CD4-positive, alpha-beta memory T cell (primary cell): ENCODE measurements at regions of chr11 and their contacts with region 1.

Region 1: GRCh38 chr11:18706330-18707243 is 8.0 kb downstream of the TMEM86A start:
- DNase-seq: peak; percentile 50 to 77 (median 61)
- H3K4me3 ChIP-seq: peak overlapping the region; percentile 53 to 60
- H3K4me3 Mint-ChIP-seq: peak overlapping the region; percentile 91 to 97 (median 95)
- H3K27ac ChIP-seq: peak overlapping the region; percentile 52
- H3K27ac Mint-ChIP-seq: peak overlapping the region; percentile 78 to 98 (median 96)
- H3K4me1 ChIP-seq: peaks cover 13% of the 10 kb centered on the region
- H3K4me1 Mint-ChIP-seq: peaks cover 13 to 30% (median 21%) of the 10 kb centered on the region in 4 donors
- H3K27me3 ChIP-seq: no peaks in the 10 kb centered on the region
- H3K27me3 Mint-ChIP-seq: no peaks in the 10 kb centered on the region

Region 2: DNA sequence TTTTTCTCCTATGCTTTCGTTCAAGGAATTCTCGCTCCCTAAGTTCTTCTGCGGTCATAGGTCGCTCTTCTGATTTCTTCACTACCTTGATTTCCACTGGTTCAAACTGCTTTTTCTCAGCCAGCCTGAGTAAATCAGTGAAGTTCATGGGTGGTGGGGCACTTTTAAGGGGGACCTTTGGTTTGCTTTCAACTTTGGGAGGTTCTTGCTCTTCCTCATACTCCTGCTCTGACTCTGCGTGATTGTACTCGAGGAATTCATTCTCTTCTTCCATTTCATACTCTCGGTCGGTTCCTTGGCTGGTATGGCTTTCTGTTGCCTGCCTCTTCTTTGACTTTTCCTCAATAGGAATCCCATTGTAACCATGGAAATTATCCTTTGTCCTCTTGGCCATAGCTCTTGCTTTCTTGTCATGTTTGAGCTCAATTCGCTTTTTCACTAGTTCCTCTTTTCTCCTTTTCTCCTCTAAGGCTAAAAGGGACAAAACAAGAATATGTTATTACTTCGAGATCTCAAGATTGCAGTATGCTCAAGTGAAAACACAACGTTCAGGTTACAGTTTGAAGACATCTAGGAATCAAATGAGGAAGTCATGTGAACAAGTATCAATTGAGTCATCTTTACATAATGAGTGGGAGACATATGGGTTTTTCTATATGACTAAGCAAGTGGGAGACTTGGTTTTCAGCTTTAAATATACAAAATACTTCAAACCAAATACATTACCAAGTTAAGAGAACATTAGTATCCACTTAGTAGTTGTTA is 90.8 kb before region 1 on chr11:
- CTCF ChIA-PET with region 1: interaction called, 3 read pairs
- POLR2A ChIA-PET with region 1: interaction called, 7 read pairs
- intact Hi-C with region 1: loop called (anchors 2 kb)
- DNase-seq: no peak
- H3K4me3 ChIP-seq: no peak overlapping the region
- H3K4me3 Mint-ChIP-seq: peak overlapping the region in 5 of 8 donors; percentile 1 to 43 (median 15)
- H3K27ac ChIP-seq: no peak overlapping the region
- H3K27ac Mint-ChIP-seq: peak overlapping the region in 4 of 7 donors; percentile 63 to 90 (median 70)
- H3K4me1 ChIP-seq: peaks cover 48% of the 10 kb centered on the region
- H3K4me1 Mint-ChIP-seq: peaks cover 31 to 61% (median 42%) of the 10 kb centered on the region in 4 donors
- H3K27me3 ChIP-seq: no peaks in the 10 kb centered on the region
- H3K27me3 Mint-ChIP-seq: no peaks in the 10 kb centered on the region

Region 3: GRCh38 chr11:18669220-18669598 is 37.4 kb before region 1 on chr11:
- CTCF ChIA-PET with region 1: interaction called, 10 read pairs
- POLR2A ChIA-PET with region 1: interaction called, 6 read pairs
- intact Hi-C with region 1: no loop called
- DNase-seq: peak in 2 of 5 donors; percentile 13 to 63
- H3K4me3 ChIP-seq: no peak overlapping the region
- H3K4me3 Mint-ChIP-seq: peak overlapping the region in 7 of 8 donors; percentile 20 to 69 (median 63)
- H3K27ac ChIP-seq: no peak overlapping the region
- H3K27ac Mint-ChIP-seq: peak overlapping the region; percentile 3 to 91 (median 70)
- H3K4me1 ChIP-seq: peaks cover 47% of the 10 kb centered on the region
- H3K4me1 Mint-ChIP-seq: peaks cover 27 to 76% (median 52%) of the 10 kb centered on the region in 4 donors
- H3K27me3 ChIP-seq: no peaks in the 10 kb centered on the region
- H3K27me3 Mint-ChIP-seq: no peaks in the 10 kb centered on the region

Region 4: DNA sequence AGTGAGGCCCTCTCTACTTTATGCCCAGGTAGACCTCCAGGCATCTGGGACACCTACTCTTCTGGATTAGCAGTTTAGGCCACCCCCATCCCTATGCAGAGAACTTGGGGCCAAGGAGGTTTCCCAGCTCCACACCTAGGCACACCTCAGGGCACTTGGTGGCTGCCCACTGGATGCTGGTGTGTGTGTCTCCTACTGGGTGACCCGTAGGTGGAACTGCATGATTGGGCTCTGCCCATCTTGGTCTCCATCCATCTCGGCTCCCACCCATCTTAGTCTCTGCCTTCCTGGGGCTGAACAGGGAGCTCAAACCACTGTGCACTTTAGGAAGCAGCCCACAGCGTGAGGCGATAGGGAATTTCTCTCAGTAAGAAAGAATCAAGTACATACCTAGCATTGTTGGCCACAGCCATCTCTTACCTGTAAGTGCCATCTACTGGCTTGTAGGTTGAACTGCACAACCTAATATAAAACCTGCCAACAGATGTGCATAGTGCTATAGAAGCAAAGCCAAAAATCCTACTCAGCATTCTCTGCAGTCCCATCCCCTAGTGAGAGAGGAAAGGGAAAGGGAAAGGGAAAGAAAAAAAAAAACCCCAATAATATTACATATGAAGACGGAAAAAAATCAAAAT is 146.6 kb after region 1 on chr11:
- CTCF ChIA-PET with region 1: no interaction called
- POLR2A ChIA-PET with region 1: no interaction called
- intact Hi-C with region 1: no loop called
- DNase-seq: peak in 1 of 5 donors; percentile 1
- H3K4me3 ChIP-seq: no peak overlapping the region
- H3K4me3 Mint-ChIP-seq: no peak overlapping the region
- H3K27ac ChIP-seq: no peak overlapping the region
- H3K27ac Mint-ChIP-seq: no peak overlapping the region
- H3K4me1 ChIP-seq: no peaks in the 10 kb centered on the region
- H3K4me1 Mint-ChIP-seq: no peaks in the 10 kb centered on the region
- H3K27me3 ChIP-seq: no peaks in the 10 kb centered on the region
- H3K27me3 Mint-ChIP-seq: peaks cover 10 to 11% of the 10 kb centered on the region in 2 donors